Panc1 (cell line): ENCODE measurements at regions of chr18 and their contacts with region 1.

Region 1: DNA sequence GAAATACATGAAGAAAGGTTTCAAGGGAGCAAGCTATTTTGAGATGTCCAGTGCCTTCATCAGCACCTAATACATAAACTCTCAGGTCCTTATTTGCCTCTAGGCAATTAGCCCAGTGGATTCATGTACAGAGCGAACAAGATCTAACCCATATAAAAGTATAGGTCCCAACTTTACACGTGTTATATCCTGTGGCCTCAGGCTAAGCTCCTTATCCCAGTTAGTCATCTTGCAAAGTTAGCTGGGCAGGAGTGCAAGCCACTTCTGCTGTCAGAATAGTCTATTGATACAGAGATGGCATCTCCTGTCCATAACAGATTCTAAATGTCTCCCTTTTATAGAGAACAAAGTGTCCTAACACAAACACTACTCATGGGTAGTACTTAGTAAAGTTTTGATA is 203.9 kb upstream of the PIK3C3 start:
- DNase-seq: no peak
- ATAC-seq: no peak
- H3K4me3 ChIP-seq: no peak overlapping the region
- H3K27ac ChIP-seq: no peak overlapping the region
- H3K4me1 ChIP-seq: no peaks in the 10 kb centered on the region
- H3K27me3 ChIP-seq: no peaks in the 10 kb centered on the region
- CTCF ChIP-seq: no peak

Region 2: GRCh38 chr18:41906528-41907146 is 155.5 kb after region 1 on chr18:
- CTCF ChIA-PET with region 1: no interaction called
- POLR2A ChIA-PET with region 1: no interaction called
- in situ Hi-C with region 1: no loop called
- intact Hi-C with region 1: loop called (anchors 2 kb)
- DNase-seq: peak; percentile 7
- ATAC-seq: no peak
- H3K4me3 ChIP-seq: no peak overlapping the region
- H3K27ac ChIP-seq: no peak overlapping the region
- H3K4me1 ChIP-seq: no peaks in the 10 kb centered on the region
- H3K27me3 ChIP-seq: no peaks in the 10 kb centered on the region
- CTCF ChIP-seq: peak; percentile 36; the same call in 1 of the 2 replicates